HCT116 (cell line): ENCODE measurements at regions of chr5 and their contacts with region 1.

Region 1: GRCh38 chr5:173972925-173973615 is 15.9 kb upstream of the C5orf47 start:
- DNase-seq: peak; percentile 64
- ATAC-seq: peak; percentile 87
- H3K4me3 ChIP-seq: peak overlapping the region; percentile 34 to 51
- H3K27ac ChIP-seq: peak overlapping the region; percentile 6; the same call in 1 of the 2 replicates
- H3K4me1 ChIP-seq: peaks cover 0 to 9% of the 10 kb centered on the region in 2 experiments; a peak in 2 of 4 replicates
- H3K27me3 ChIP-seq: no peaks in the 10 kb centered on the region
- CTCF ChIP-seq: peak; percentile 80 to 87 (median 85)
- POLR2A ChIP-seq: no peak
- RAD21 ChIP-seq: peak; percentile 93

Region 2: DNA sequence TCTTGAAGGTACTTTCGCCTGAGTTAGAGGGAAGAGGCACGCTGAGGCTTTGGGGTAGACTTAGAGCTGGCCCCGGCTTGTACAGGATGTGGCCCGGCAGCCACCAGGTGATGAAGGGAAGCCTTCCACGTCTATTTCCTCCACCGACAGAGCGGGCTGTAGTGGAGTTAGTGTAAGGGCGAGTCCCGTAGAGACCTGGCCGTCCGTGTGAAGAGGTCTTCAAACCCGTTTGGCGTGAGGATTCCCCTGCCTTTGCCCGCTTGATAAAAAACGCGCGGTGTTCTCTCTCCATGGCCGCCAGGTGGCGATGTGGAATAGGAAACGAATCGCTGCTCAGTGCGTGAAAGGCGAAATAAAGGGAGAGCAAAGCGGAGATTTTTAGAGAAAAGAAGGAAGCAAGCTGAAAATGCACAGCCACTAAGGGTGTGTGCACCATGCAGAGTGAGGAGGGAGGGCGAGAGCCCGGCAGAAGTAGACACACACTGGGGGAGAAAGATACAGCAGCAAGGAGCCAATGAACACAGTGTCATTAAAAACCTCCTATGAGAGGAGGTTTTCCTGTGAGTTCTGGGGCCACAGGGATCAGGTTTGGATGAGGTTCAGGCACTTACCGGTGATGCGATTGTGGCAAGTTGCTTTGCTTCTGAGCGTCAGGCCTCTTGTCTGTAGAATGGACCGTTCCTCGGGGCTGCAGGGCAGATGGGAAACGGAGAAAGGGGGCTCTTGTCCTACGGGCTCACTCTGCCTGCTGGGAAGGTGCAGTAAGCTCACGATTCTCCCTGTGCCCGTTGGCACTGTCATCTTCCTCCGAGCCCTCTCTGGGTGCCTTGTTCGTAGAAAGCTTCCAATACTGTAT is 679.0 kb before region 1 on chr5:
- CTCF ChIA-PET with region 1: no interaction called
- POLR2A ChIA-PET with region 1: no interaction called
- RAD21 ChIA-PET with region 1: no interaction called
- intact Hi-C with region 1: loop called (anchors 5 kb)
- DNase-seq: peak; percentile 56
- ATAC-seq: peak; percentile 93
- H3K4me3 ChIP-seq: peak overlapping the region; percentile 10 to 27; a peak in 3 of 4 replicates
- H3K27ac ChIP-seq: no peak overlapping the region
- H3K4me1 ChIP-seq: peaks cover 7 to 20% of the 10 kb centered on the region in 2 experiments; a peak in 3 of 4 replicates
- H3K27me3 ChIP-seq: no peaks in the 10 kb centered on the region
- CTCF ChIP-seq: peak; percentile 77 to 97 (median 89)
- POLR2A ChIP-seq: no peak
- RAD21 ChIP-seq: peak; percentile 99

Region 3: DNA sequence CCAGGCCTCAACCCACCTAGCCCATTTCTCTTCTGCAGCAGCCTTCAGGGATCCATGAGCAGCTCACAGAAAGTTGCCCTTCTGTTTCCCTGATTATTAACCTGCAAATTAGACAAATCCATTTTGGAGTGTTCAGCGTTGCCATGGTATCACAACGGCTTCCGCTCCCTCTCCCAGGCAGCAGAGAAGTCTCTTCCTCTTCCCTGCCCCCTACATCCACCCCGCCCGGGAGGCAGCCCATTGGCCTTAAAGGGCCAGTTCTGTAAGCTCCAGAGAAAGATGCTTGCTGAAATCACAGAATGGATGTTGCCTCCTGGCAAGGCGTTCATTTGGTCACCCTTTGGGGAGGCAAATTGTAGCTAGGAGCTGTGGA is 308.9 kb before region 1 on chr5:
- CTCF ChIA-PET with region 1: no interaction called
- POLR2A ChIA-PET with region 1: no interaction called
- RAD21 ChIA-PET with region 1: no interaction called
- intact Hi-C with region 1: no loop called
- DNase-seq: no peak
- ATAC-seq: no peak
- H3K4me3 ChIP-seq: no peak overlapping the region
- H3K27ac ChIP-seq: no peak overlapping the region
- H3K4me1 ChIP-seq: no peaks in the 10 kb centered on the region
- H3K27me3 ChIP-seq: no peaks in the 10 kb centered on the region
- CTCF ChIP-seq: no peak
- POLR2A ChIP-seq: no peak
- RAD21 ChIP-seq: no peak

Region 4: DNA sequence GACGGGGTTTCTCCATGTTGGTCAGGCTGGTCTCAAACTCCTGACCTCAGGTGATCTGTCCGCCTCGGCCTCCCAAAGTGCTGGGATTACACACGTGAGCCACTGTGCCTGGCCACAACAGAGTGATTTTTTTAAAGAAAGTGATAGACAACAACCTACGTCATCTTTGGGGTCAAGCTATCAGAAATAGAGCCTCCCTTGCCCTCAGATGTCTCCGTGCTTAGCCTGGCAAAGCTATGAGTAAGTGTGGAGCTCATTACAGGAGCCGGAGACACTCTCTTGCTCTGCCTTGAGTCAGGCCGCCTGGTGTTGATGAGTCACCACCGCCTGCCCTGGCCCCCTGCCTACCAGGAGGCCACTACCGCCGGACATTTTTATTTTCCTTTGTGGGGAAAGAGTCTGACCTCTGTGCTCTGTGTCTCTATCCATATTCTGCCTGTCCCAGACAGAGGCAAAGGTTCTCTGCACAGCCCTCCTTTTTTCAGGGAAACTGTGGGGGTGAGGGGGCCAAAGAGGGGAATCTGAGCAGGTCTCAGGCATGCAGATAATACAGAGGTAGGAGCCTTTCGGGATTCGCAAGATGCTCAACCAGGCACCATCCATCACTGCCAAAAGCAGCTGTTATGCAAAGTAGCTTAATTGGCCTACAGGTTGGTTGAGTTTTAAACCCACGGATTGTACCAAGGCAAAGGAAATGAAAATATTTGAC is 208.6 kb before region 1 on chr5:
- CTCF ChIA-PET with region 1: no interaction called
- POLR2A ChIA-PET with region 1: interaction called, 3 read pairs
- RAD21 ChIA-PET with region 1: interaction called in 1 of 2 experiments, 3 read pairs
- intact Hi-C with region 1: loop called (anchors 10 kb)
- DNase-seq: peak; percentile 94
- ATAC-seq: peak; percentile 95
- H3K4me3 ChIP-seq: peak overlapping the region in 1 of 2 experiments; percentile 4; a peak in 1 of 4 replicates
- H3K27ac ChIP-seq: no peak overlapping the region
- H3K4me1 ChIP-seq: peaks cover 24 to 40% of the 10 kb centered on the region in 2 experiments
- H3K27me3 ChIP-seq: peaks cover 66% of the 10 kb centered on the region; the same call in 1 of the 2 replicates
- CTCF ChIP-seq: no peak
- POLR2A ChIP-seq: no peak
- RAD21 ChIP-seq: peak; percentile 34

Region 5: DNA sequence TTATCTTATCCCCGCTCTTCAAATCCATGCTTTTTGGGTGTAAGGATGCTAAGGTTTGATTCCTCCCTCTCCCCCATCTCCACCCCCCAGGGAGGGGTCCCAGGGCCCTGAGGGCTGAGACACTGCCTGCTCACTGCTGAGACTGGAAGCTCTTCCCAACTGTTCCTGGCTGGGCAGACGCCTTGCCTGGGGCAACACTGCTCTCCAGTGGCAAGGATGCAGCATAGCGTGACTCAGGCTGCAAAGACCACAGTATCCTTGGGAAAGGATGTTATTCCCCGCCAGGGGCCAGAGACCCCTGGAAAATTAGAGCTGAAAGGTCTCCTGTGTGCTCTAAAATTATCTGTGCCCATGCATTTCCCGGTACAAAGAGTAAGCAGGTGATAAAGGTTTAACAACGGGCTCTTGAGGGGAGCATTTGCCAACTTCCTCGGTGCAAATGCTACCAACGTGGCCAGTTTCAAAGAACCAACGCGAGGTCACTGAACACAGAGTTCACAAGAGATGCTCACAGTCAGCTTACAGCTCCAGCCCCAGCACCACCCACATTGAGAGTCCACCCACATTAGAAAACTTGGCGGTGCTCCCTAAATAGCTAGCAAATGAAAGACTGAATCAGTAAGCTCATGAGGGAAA is 344.3 kb after region 1 on chr5:
- CTCF ChIA-PET with region 1: interaction called, 3 read pairs
- POLR2A ChIA-PET with region 1: no interaction called
- RAD21 ChIA-PET with region 1: interaction called in 1 of 2 experiments, 3 read pairs
- intact Hi-C with region 1: loop called (anchors 2 kb)
- DNase-seq: no peak
- ATAC-seq: peak; percentile 97
- H3K4me3 ChIP-seq: no peak overlapping the region
- H3K27ac ChIP-seq: no peak overlapping the region
- H3K4me1 ChIP-seq: no peaks in the 10 kb centered on the region
- H3K27me3 ChIP-seq: peaks cover 30% of the 10 kb centered on the region
- CTCF ChIP-seq: peak; percentile 79 to 94 (median 91)
- POLR2A ChIP-seq: no peak
- RAD21 ChIP-seq: peak; percentile 95